ENCODE measurements at regions of chr18 and their contacts with region 1.

Region 1: DNA sequence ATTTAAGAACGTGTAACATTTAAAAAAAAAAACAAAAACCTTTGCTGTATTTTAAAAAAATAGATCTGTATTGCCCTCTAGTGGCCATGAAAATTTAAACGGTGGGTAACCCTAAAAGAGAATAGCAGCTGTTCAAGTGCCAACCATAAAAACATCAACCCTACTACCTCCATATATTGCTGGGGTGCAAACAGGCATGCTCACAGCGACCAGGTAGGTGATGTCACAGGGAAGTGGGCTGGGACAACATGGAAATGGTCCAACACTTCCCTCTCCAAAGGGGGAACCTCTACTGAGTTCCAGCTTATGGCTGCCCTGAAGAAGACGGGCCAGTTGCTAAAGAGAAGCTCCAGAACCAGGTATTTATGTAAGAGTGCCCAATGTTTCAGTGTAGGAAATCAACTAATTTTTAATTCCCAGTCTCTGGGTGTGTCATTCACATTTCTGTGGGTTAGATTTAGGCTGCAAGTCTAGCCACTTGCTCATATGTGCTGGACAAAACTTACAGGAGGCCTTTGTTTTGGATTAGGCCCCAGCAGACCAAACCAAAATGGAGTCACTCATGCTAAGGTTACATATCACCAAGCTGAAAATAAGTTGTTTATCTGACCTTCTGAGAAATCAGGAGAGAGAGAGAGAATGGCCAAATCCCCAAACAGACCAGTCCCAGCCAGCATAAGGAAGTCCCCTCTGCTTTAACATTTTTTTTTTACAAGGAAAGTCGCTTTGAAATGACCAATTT is 54.5 kb downstream of the SKA1 start:
- DNase-seq: peak in 2 of 5 donors; percentile 59 to 61
- H3K4me3 ChIP-seq: no peak overlapping the region
- H3K27ac ChIP-seq: no peak overlapping the region
- H3K4me1 ChIP-seq: no peaks in the 10 kb centered on the region
- H3K27me3 ChIP-seq: no peaks in the 10 kb centered on the region
- CTCF ChIP-seq: peak; percentile 29

Region 2: DNA sequence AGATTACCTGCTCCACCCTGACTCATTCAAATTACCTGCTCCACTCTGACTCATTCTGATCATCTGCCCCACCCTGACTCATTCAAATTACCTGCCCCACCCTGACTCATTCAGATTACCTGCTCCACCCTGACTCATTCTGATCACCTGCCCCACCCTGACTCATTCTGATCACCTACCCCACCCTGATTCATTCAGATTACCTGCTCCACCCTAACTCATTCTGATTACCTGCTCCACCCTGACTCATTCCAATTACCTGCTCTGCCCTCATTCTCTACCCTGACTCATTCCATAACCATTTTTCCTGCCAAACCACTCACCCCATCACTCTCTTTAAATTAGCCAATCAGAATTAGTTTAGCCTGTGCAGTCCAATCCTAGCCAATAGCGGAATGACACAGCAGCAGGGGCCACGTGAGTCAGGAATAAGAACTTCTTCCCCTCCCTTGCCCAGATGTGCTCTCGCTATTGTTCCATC is 189.3 kb before region 1 on chr18:
- intact Hi-C with region 1: no loop called
- DNase-seq: no peak
- H3K4me3 ChIP-seq: no peak overlapping the region
- H3K27ac ChIP-seq: no peak overlapping the region
- H3K4me1 ChIP-seq: no peaks in the 10 kb centered on the region
- H3K27me3 ChIP-seq: no peaks in the 10 kb centered on the region
- CTCF ChIP-seq: no peak

Region 3: DNA sequence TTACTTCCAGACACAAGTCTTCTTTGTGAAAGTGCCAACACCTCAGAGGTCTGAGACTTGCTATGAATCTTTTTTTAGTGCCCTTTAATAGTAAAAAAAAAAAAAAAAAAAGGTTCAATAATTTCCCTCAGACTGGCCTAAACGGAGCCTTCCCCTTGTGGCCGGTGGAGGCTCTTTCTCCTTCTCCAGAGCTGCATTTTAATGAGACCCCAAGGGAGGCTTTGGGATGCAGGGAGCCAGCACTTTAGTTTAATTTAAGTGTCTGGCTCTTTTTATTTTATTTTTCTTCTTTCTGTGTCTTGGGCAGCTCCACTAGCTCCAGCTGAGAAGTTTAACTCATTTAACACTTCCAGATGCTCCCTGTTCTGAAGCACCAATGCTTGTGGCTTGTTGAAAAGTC is 62.7 kb after region 1 on chr18:
- intact Hi-C with region 1: loop called (anchors 10 kb)
- DNase-seq: peak in 1 of 5 donors; percentile 64
- H3K4me3 ChIP-seq: no peak overlapping the region
- H3K27ac ChIP-seq: no peak overlapping the region
- H3K4me1 ChIP-seq: no peaks in the 10 kb centered on the region
- H3K27me3 ChIP-seq: no peaks in the 10 kb centered on the region
- CTCF ChIP-seq: no peak